ENCODE measurements at regions of chr11 and their contacts with region 1.

Region 1: GRCh38 chr11:43987384-43988039 is 45.1 kb downstream of the C11orf96 start:
- DNase-seq: peak; percentile 93 to 94
- ATAC-seq: peak; percentile 79 to 90 (median 87)
- H3K4me3 ChIP-seq: peak overlapping the region in 4 of 10 donors; percentile 3 to 15 (median 12)
- H3K27ac ChIP-seq: peak overlapping the region; percentile 25 to 88 (median 81)
- H3K4me1 ChIP-seq: peaks cover 30 to 72% (median 68%) of the 10 kb centered on the region in 9 donors
- H3K27me3 ChIP-seq: no peaks in the 10 kb centered on the region
- CTCF ChIP-seq: no peak

Region 2: GRCh38 chr11:44029977-44030911 is 42.7 kb after region 1 on chr11:
- intact Hi-C with region 1: loop called in 6 of 10 experiments (anchors 1 to 5 kb)
- DNase-seq: peak; percentile 42 to 70
- ATAC-seq: peak; percentile 79 to 91 (median 85)
- H3K4me3 ChIP-seq: no peak overlapping the region
- H3K27ac ChIP-seq: peak overlapping the region; percentile 49 to 89 (median 78)
- H3K4me1 ChIP-seq: peaks cover 9 to 43% (median 36%) of the 10 kb centered on the region in 9 donors
- H3K27me3 ChIP-seq: no peaks in the 10 kb centered on the region
- CTCF ChIP-seq: peak in 1 of 9 donors; percentile 3

Region 3: GRCh38 chr11:44036811-44037657 is 49.5 kb after region 1 on chr11:
- intact Hi-C with region 1: loop called in 5 of 10 experiments (anchors 1 to 5 kb)
- DNase-seq: peak; percentile 80 to 86
- ATAC-seq: peak; percentile 88 to 95 (median 92)
- H3K4me3 ChIP-seq: no peak overlapping the region
- H3K27ac ChIP-seq: peak overlapping the region in 3 of 10 donors; percentile 9 to 31 (median 25)
- H3K4me1 ChIP-seq: peaks cover 0 to 31% (median 24%) of the 10 kb centered on the region in 9 donors
- H3K27me3 ChIP-seq: no peaks in the 10 kb centered on the region
- CTCF ChIP-seq: peak; percentile 79 to 94 (median 88)